ENCODE measurements at regions of chr17 and their contacts with region 1.

Region 1: DNA sequence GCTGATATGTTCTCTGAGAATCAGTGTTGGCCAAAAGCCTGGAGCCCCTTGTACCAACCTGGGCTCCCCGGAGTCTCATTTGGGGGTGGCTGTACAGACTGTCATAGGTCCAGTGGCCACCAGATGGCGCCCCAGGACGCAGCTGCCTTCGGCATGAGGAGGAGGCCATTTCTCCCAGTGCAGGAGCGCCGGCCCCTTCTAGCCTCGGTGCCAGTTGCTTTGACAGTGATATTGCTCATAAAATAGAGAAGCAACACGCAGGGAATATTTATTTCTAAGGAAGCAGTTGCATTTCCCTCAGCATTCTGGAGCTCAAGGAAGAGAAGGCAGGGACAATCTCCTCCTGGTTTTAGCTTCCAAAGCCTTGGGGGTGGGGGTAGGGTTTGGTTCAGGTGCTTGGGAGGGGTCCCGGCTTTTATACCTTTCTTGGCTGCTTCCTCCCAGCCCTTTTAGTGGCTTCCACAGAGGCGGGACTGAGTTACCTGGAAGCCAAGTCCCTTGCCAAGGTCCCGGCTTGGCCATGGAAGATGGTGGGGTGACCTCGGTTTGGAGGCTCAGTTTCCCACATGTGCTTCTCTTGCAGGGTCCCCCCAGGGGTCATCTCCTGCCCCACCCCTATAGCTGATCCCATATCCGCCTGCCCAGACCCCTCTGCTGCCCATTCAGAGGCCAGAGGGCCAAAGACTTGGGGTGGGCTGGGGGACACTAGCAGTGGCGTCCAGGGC is 117.8 kb upstream of the CDC42EP4 start:
- DNase-seq: peak; percentile 68 to 90 (median 82)
- ATAC-seq: peak; percentile 96
- H3K4me3 ChIP-seq: no peak overlapping the region
- H3K4me3 Mint-ChIP-seq: peak overlapping the region in 7 of 10 donors; percentile 27 to 64 (median 37)
- H3K27ac ChIP-seq: no peak overlapping the region
- H3K27ac Mint-ChIP-seq: peak overlapping the region in 3 of 9 donors; percentile 1 to 55 (median 17)
- H3K4me1 ChIP-seq: no peaks in the 10 kb centered on the region
- H3K4me1 Mint-ChIP-seq: peaks cover 0 to 17% (median 15%) of the 10 kb centered on the region in 7 donors
- H3K27me3 ChIP-seq: no peaks in the 10 kb centered on the region
- H3K27me3 Mint-ChIP-seq: peaks cover 0 to 2% (median 0%) of the 10 kb centered on the region in 5 donors

Region 2: DNA sequence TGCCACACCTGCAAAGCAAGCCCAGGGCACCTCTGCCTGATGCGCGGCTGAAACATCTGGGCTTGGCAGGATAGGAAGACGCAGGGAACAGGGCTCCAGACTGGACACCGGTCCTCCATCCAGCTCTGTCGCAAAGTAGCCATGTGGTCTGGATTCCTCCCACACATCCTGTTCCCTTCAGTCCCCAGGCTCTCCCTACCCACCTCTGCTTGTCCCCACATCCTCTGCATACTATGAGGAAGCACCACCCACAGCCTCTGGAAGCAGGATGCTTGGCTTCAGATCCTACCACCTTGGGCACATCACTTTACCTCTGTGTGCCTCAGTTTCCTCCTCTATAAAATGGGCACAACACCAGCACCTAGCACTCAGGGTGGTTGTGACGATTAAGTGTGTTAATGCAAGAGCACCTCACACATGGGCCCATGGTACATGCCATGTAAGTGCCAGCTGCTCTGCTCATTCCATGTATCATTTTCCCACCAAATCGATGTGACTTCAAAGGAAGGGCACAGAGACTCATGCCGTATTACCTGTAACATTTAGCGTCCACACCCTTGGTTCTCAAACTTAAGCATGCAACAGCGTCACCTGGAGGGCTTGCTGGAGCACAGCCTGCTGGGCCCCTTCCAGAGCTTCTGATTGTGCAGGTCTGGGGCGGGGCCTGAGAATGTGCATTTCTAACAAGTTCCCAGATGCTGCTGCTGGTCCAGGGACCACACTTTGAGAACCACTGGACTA is 353.2 kb after region 1 on chr17:
- CTCF ChIA-PET with region 1: interaction called, 4 read pairs
- POLR2A ChIA-PET with region 1: no interaction called
- intact Hi-C with region 1: loop called in 1 of 2 experiments (anchors 1 kb)
- DNase-seq: peak in 3 of 9 donors; percentile 8 to 26 (median 9)
- ATAC-seq: peak; percentile 10
- H3K4me3 ChIP-seq: no peak overlapping the region
- H3K4me3 Mint-ChIP-seq: peak overlapping the region in 2 of 10 donors; percentile 6 to 16
- H3K27ac ChIP-seq: no peak overlapping the region
- H3K27ac Mint-ChIP-seq: peak overlapping the region in 5 of 9 donors; percentile 22 to 84 (median 61)
- H3K4me1 ChIP-seq: peaks cover 0 to 7% of the 10 kb centered on the region in 2 donors
- H3K4me1 Mint-ChIP-seq: peaks cover 0 to 22% (median 12%) of the 10 kb centered on the region in 7 donors
- H3K27me3 ChIP-seq: no peaks in the 10 kb centered on the region
- H3K27me3 Mint-ChIP-seq: peaks cover 0 to 2% (median 0%) of the 10 kb centered on the region in 5 donors

Region 3: GRCh38 chr17:73956669-73957465 is 527.3 kb after region 1 on chr17:
- CTCF ChIA-PET with region 1: interaction called, 11 read pairs
- POLR2A ChIA-PET with region 1: no interaction called
- intact Hi-C with region 1: loop called in 1 of 2 experiments (anchors 1 kb)
- DNase-seq: peak; percentile 18 to 65 (median 49)
- ATAC-seq: peak; percentile 70
- H3K4me3 ChIP-seq: no peak overlapping the region
- H3K4me3 Mint-ChIP-seq: no peak overlapping the region
- H3K27ac ChIP-seq: no peak overlapping the region
- H3K27ac Mint-ChIP-seq: no peak overlapping the region
- H3K4me1 ChIP-seq: no peaks in the 10 kb centered on the region
- H3K4me1 Mint-ChIP-seq: peaks cover 0 to 4% (median 0%) of the 10 kb centered on the region in 7 donors
- H3K27me3 ChIP-seq: no peaks in the 10 kb centered on the region
- H3K27me3 Mint-ChIP-seq: peaks cover 3 to 7% (median 4%) of the 10 kb centered on the region in 5 donors

Region 4: GRCh38 chr17:73998653-73999645 is 569.3 kb after region 1 on chr17:
- CTCF ChIA-PET with region 1: interaction called, 6 read pairs
- POLR2A ChIA-PET with region 1: no interaction called
- intact Hi-C with region 1: loop called (anchors 1 to 5 kb)
- DNase-seq: peak; percentile 24 to 70 (median 54)
- ATAC-seq: peak; percentile 84
- H3K4me3 ChIP-seq: no peak overlapping the region
- H3K4me3 Mint-ChIP-seq: no peak overlapping the region
- H3K27ac ChIP-seq: no peak overlapping the region
- H3K27ac Mint-ChIP-seq: no peak overlapping the region
- H3K4me1 ChIP-seq: no peaks in the 10 kb centered on the region
- H3K4me1 Mint-ChIP-seq: peaks cover 0 to 8% (median 0%) of the 10 kb centered on the region in 7 donors
- H3K27me3 ChIP-seq: no peaks in the 10 kb centered on the region
- H3K27me3 Mint-ChIP-seq: peaks cover under 1 to 24% (median 14%) of the 10 kb centered on the region in 5 donors

Measured in naive thymus-derived CD4-positive, alpha-beta T cell (primary cell).